OCI-LY7 (cell line): ENCODE measurements at regions of chr15 and their contacts with region 1.

Region 1: GRCh38 chr15:90931737-90932659 is at the start of gene HDDC3:
- DNase-seq: peak; percentile 95
- H3K4me3 ChIP-seq: peak within 1 kb of the TSS; percentile 79
- H3K27ac ChIP-seq: peak within 1 kb of the TSS; percentile 81
- H3K4me1 ChIP-seq: peaks cover 61% of the 10 kb centered on the region
- CTCF ChIP-seq: peak; percentile 92
- total RNA-seq, gene HDDC3: 31.8 and 35.8 TPM in 2 replicates

Region 2: GRCh38 chr15:90387537-90388461 is 544.2 kb before region 1 on chr15 and contains the start of gene IQGAP1:
- CTCF ChIA-PET with region 1: no interaction called
- POLR2A ChIA-PET with region 1: interaction called, 6 read pairs
- intact Hi-C with region 1: loop called (anchors 5 kb)
- DNase-seq: peak; percentile 98
- H3K4me3 ChIP-seq: peak within 1 kb of the TSS; percentile 84
- H3K27ac ChIP-seq: peak within 1 kb of the TSS; percentile 71
- H3K4me1 ChIP-seq: peaks cover 27% of the 10 kb centered on the region
- CTCF ChIP-seq: no peak
- total RNA-seq, gene IQGAP1: 98.7 and 147 TPM in 2 replicates

Region 3: DNA sequence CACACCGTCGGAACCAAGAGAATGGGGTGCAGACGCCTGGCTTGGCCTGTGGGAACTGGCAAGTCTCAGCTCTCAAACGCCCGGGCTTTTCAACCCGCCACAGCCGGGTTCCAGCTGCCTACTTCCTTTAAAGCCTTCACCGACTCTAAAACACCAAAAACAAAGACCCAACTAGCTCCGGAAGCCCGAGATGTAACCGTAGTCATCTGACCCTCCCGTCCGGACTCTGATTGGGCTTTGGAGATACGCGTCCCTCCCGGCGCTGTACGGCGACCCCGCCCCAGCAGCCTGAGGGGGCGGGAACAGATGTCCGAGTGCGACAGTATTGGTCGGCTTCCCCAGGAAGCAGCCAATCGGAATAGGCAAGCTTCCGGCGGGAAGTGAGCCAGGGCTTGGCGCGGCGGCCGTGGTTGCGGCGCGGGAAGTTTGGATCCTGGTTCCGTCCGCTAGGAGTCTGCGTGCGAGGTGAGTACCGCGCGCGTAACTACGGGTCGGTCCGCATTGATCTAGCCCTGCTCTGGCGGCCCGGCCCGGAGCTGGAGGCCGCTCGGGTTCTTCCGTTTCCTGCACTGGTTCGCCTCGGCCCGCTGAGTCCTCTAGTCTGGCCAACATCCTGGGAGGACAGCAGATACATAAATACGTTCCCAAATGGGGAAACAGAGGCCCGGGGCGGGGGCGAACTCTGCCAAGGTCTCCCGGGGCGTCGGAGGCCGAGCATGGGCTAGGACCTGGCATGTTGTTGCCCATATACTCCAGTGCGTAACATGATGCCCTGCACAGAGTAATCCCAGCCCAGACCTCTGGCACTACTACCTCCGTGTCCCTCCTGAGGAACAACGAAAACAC is 214.8 kb before region 1 on chr15 and contains the start of gene BLM:
- CTCF ChIA-PET with region 1: interaction called, 4 read pairs
- POLR2A ChIA-PET with region 1: interaction called, 10 read pairs
- intact Hi-C with region 1: loop called (anchors 2 kb)
- DNase-seq: peak; percentile 98
- H3K4me3 ChIP-seq: peak within 1 kb of the TSS; percentile 96
- H3K27ac ChIP-seq: peak within 1 kb of the TSS; percentile 88
- H3K4me1 ChIP-seq: peaks cover 26% of the 10 kb centered on the region
- CTCF ChIP-seq: 0 out of 2 replicates have a peak, but pooled peaks have one; percentile 21
- total RNA-seq, gene BLM: 47.1 and 52.8 TPM in 2 replicates

Region 4: DNA sequence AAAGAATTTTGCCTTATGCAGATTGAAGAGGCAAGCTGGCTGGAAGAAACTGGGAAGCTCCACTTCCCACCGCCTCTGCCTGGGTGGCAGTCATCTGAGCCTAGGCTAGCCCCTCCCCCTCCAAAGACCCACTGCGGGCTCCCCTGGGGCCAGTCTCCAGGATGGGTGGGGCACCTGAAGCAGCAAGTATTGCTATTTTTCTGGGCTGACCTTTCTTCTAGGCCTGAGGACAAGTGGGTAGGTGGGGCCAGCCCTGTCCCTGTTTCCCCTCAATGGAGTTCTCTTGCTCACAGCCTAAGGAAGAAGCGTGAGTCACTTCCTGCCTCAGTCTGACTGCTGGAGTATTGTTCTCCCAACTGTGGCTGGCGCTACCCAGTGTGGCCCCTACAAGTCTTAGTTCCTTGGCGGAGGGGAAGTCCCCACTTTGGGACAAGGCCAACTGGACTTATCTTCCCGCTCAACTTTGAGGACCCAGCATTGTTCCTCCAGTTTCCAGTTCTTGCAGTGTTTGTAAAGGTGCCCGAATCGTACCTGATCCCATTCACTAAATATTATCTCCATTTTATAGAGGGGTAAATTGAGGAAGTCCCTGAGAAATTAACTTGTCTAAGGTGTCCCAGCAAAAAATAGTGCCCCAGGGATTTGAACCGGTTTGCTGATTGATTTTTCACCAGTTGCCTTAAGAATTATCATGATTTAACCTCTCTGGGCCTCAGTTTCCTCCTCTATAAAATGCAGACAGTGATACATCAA is 62.2 kb before region 1 on chr15:
- CTCF ChIA-PET with region 1: no interaction called
- POLR2A ChIA-PET with region 1: interaction called, 3 read pairs
- intact Hi-C with region 1: loop called (anchors 2 kb)
- DNase-seq: peak; percentile 40
- H3K4me3 ChIP-seq: no peak overlapping the region
- H3K27ac ChIP-seq: no peak overlapping the region
- H3K4me1 ChIP-seq: peaks cover 36% of the 10 kb centered on the region
- CTCF ChIP-seq: no peak

Region 5: DNA sequence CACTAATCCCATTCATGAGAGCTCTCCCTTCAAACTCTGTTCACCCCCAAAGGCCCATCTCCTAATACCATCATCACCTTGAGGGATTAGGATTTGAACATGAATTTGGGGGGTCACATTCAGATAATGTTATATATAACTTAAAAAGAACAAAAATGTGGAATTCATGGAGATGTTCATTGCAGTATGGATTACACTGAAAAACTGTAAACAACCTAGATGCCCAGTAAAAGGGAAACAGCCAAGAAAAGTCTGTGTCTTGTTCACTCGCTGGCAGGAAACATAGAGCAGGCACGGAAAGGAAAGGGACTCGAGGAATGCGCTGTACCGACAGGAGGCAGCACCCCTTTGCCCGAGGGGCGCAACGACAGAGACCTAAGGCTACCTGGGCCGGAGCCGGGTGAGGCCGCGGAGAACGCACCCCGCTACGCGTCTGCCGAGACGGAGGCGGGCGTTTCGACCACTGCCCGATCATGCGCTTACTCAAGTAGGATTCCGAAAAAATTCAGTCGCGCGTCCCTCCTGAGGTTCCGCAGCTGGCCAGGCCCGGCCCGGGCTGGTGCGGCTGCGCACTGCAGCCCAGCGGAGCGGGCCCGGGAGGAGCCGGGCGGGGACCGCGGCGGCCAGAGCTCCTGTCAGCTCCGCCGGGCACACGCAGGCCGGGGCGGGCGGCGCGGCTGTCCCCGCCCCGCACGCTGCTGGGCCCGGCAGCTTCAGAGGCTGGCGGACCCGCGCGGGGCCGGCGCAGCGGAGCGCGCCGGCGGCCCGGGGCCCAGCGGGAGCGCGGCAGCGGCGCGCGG is 29.8 kb before region 1 on chr15:
- CTCF ChIA-PET with region 1: interaction called, 16 read pairs
- POLR2A ChIA-PET with region 1: interaction called, 24 read pairs
- intact Hi-C with region 1: loop called (anchors 1 kb)
- DNase-seq: peak; percentile 75
- H3K4me3 ChIP-seq: peak overlapping the region; percentile 69
- H3K27ac ChIP-seq: no peak overlapping the region
- H3K4me1 ChIP-seq: peaks cover 30% of the 10 kb centered on the region
- CTCF ChIP-seq: peak; percentile 72

Region 6: DNA sequence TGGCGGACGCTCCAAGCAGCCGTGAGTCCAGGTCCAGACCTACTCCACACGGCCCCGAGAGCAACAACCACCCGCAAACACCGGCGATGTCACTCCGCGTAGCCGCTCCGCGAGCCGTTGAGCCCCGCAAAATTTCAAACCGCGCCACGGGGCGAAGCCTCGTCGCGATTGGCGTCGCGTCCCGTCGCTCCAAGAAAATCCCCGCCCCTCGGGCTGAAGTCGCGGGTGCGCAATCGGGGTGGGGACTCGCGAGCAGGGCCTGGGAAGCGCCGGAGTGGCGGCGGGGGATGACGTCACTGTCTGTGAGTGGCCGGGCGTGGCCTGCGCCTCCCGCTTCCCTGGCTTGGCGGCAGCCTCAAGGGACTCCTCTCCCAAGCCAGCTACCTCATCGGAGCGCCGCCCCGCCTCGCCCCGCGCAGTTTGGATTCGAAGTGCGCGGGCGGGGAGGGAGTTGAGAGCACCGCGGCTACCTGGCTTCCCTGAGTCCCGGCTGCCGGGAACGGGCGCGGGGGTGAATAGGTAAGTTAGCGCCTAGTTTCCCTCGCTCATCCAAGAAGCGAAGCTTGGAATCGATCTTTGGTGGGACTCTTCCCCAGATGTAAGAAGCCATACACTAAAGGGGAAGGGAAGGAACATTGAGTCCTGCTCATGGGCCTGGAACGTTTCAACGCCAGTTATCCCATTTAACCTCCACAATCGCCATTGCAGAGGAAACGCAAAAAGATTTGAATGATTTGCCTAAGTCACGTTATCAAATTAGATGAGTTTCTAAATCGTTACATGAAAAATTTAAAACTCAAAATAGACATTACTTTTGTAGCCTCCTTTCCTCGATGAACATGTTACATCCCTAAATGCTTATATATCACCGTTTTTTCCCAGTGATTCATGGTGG is 62.7 kb after region 1 on chr15 and contains the start of gene PRC1:
- CTCF ChIA-PET with region 1: no interaction called
- POLR2A ChIA-PET with region 1: interaction called, 6 read pairs
- intact Hi-C with region 1: loop called (anchors 2 kb)
- DNase-seq: peak; percentile 98
- H3K4me3 ChIP-seq: peak within 1 kb of the TSS; percentile 84
- H3K27ac ChIP-seq: peak within 1 kb of the TSS; percentile 68
- H3K4me1 ChIP-seq: peaks cover 30% of the 10 kb centered on the region
- CTCF ChIP-seq: no peak
- total RNA-seq, gene PRC1: 224 and 402 TPM in 2 replicates